Activated naive CD4-positive, alpha-beta T cell treated with anti-CD3 and anti-CD28 coated beads for 36 hours (primary cell): ENCODE measurements at regions of chr5 and their contacts with region 1.

Region 1: GRCh38 chr5:148559461-148559860 is 94.9 kb downstream of the HTR4 start:
- DNase-seq: no peak
- H3K4me3 Mint-ChIP-seq: no peak overlapping the region
- H3K27ac Mint-ChIP-seq: no peak overlapping the region
- H3K4me1 Mint-ChIP-seq: no peaks in the 10 kb centered on the region
- H3K27me3 Mint-ChIP-seq: peaks cover 10% of the 10 kb centered on the region

Region 2: GRCh38 chr5:148237785-148238184 is 321.7 kb before region 1 on chr5:
- CTCF ChIA-PET with region 1: no interaction called
- intact Hi-C with region 1: no loop called
- DNase-seq: no peak
- H3K4me3 Mint-ChIP-seq: no peak overlapping the region
- H3K27ac Mint-ChIP-seq: no peak overlapping the region
- H3K4me1 Mint-ChIP-seq: no peaks in the 10 kb centered on the region
- H3K27me3 Mint-ChIP-seq: no peaks in the 10 kb centered on the region

Region 3: DNA sequence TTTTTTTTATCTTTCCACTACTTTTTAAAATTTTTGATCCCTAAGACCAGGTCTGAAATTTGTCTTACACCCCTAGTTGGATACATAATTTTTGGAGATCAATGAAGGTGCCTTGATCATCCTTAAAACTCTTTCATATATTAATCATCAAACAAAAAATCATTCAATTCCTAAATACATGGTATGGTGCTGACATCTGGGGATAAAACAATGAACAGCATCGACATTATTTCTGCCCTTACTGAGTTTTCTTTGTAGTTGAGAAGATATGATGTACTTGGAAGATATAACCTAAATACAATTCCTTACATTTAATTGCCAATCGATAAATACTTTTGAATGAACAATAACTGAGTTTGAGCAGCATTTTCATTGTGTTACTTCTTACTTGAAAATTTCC is 205.8 kb before region 1 on chr5:
- CTCF ChIA-PET with region 1: no interaction called
- intact Hi-C with region 1: no loop called
- DNase-seq: no peak
- H3K4me3 Mint-ChIP-seq: no peak overlapping the region
- H3K27ac Mint-ChIP-seq: no peak overlapping the region
- H3K4me1 Mint-ChIP-seq: no peaks in the 10 kb centered on the region
- H3K27me3 Mint-ChIP-seq: no peaks in the 10 kb centered on the region

Region 4: DNA sequence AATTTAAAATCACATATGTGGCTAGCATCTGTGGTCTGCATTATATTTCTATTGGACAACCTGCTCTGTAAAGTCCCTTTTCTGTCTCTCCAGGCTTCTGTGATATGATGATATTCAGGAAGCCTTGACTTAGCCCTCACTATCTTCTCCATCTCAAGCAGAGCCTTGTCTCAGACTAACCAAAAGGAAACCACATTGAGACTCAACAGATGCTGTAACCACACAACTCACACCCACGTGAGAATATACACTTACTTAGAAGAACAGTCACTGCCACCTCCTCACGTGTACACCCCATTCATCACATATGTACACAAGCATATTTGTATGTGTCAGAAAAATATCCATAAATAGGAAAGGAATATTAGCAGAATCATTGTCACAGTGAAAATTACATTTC is 61.2 kb after region 1 on chr5:
- CTCF ChIA-PET with region 1: no interaction called
- intact Hi-C with region 1: loop called (anchors 5 kb)
- DNase-seq: peak; percentile 6
- H3K4me3 Mint-ChIP-seq: no peak overlapping the region
- H3K27ac Mint-ChIP-seq: no peak overlapping the region
- H3K4me1 Mint-ChIP-seq: peaks cover 19% of the 10 kb centered on the region
- H3K27me3 Mint-ChIP-seq: no peaks in the 10 kb centered on the region

Region 5: GRCh38 chr5:148776780-148777179 is 217.3 kb after region 1 on chr5:
- CTCF ChIA-PET with region 1: no interaction called
- intact Hi-C with region 1: no loop called
- DNase-seq: peak; percentile 15
- H3K4me3 Mint-ChIP-seq: no peak overlapping the region
- H3K27ac Mint-ChIP-seq: no peak overlapping the region
- H3K4me1 Mint-ChIP-seq: no peaks in the 10 kb centered on the region
- H3K27me3 Mint-ChIP-seq: peaks cover 25% of the 10 kb centered on the region